ENCODE measurements at regions of chr5 and their contacts with region 1.

Region 1: DNA sequence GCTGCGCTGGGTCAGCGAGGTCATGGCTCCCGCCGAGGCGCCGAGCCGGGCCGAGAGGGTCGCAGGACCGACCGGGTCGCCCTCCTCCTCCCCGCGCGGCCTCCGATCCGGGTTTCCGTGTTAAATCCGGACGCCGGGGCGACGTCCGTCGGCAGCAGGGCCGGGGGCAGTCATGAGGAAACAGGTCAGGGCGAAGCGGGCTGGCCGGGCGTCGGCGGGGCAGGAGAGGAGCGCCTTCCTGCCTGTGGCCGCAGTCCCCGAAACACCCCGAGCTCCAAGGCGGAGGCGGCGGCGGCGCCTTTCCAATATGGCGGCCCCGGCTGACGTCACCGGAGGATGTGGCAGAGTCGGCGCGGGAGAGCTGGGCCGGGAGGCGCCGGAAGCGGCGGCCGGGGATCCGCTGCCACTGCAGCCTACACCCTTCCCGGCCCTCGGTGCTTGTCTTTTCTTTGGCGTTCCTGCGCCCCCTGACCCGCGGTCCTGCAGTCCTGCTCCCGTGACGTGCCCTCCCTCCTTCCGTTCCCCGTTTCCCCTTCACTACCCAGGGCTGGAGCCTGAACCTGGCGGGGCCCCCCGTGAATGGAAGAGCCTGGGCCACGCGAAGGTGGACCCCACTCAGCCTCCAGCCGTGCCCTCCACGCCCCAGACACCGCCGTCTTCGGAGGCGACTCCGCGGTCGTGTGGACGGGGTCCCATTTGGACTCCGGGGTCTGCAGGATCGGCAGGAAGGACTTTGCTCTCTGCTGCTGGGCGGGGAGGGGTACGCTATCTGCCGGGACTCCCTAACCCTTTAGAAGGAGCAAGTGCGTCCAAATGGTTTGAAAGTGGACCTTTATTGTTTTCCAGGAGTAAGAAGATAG is at the start of gene GOLPH3:
- DNase-seq: peak; percentile 62 to 97
- H3K4me3 ChIP-seq: peak within 1 kb of the TSS; percentile 83 to 88 (median 84)
- H3K27ac ChIP-seq: peak within 1 kb of the TSS; percentile 99
- H3K4me1 ChIP-seq: no peaks in the 10 kb centered on the region
- H3K27me3 ChIP-seq: no peaks in the 10 kb centered on the region
- CTCF ChIP-seq: peak in 2 of 3 experiments; percentile 2 to 7; a peak in 2 of 4 replicates
- EP300 ChIP-seq: no peak; a peak in 1 of 3 replicates
- POLR2A ChIP-seq: peak; percentile 90 to 98
- RAD21 ChIP-seq: no peak
- total RNA-seq, gene GOLPH3: 86.1 and 93.6 TPM in 2 replicates

Region 2: DNA sequence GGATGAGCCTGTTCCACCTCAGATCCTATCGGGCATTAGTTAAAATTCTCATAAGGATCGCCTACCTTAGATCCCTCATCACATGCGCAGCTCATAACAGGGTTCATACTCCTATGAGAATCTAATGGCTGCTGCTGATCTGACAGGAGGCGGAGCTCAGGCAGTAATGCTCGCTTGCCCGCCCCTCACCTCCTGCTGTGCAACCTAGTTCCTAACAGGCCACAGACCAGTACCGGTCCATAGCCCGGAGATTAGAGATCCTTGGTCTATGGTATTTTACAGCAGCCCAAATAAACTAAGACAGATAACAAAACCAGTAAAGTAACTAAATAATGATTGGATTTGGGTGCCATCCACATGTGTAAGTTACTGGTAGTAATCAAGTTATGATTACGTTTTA is 17.6 kb before region 1 on chr5:
- CTCF ChIA-PET with region 1: interaction called, 4 read pairs
- POLR2A ChIA-PET with region 1: interaction called, 15 read pairs
- DNase-seq: peak in 1 of 2 experiments; percentile 66
- H3K4me3 ChIP-seq: no peak overlapping the region
- H3K27ac ChIP-seq: no peak overlapping the region
- H3K4me1 ChIP-seq: peaks cover 0 to 13% (median 2%) of the 10 kb centered on the region in 4 experiments; a peak in 2 of 7 replicates
- H3K27me3 ChIP-seq: no peaks in the 10 kb centered on the region
- CTCF ChIP-seq: no peak
- EP300 ChIP-seq: no peak
- POLR2A ChIP-seq: no peak
- RAD21 ChIP-seq: no peak

Region 3: GRCh38 chr5:32163785-32164184 is 10.5 kb before region 1 on chr5:
- CTCF ChIA-PET with region 1: interaction called, 5 read pairs
- POLR2A ChIA-PET with region 1: interaction called, 15 read pairs
- DNase-seq: no peak
- H3K4me3 ChIP-seq: no peak overlapping the region
- H3K27ac ChIP-seq: no peak overlapping the region
- H3K4me1 ChIP-seq: no peaks in the 10 kb centered on the region
- H3K27me3 ChIP-seq: no peaks in the 10 kb centered on the region
- CTCF ChIP-seq: no peak
- EP300 ChIP-seq: no peak
- POLR2A ChIP-seq: no peak
- RAD21 ChIP-seq: no peak

Region 4: DNA sequence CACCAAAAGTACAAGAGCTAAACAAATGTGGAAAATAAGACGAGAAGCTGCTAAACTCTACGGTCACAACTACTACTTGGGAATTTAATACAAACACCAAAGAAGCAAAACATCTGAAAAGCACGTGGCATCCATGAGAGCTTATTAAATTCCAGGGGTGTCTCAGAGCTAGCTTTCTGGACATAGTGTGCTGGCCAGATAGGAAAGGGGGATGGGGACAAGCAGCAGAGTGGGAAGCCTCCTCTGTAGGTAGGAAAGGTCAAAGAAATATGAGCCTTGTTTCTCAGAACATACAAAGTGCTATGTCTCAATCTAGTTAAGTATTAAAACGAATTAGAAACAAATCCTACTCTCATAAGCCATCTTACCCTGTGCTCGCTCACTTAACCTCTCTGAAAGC is 51.2 kb after region 1 on chr5:
- CTCF ChIA-PET with region 1: interaction called, 3 read pairs
- POLR2A ChIA-PET with region 1: interaction called, 13 read pairs
- DNase-seq: no peak
- H3K4me3 ChIP-seq: no peak overlapping the region
- H3K27ac ChIP-seq: no peak overlapping the region
- H3K4me1 ChIP-seq: no peaks in the 10 kb centered on the region
- H3K27me3 ChIP-seq: no peaks in the 10 kb centered on the region
- CTCF ChIP-seq: no peak
- EP300 ChIP-seq: no peak
- POLR2A ChIP-seq: no peak
- RAD21 ChIP-seq: no peak

Region 5: GRCh38 chr5:32239385-32239784 is 65.1 kb after region 1 on chr5:
- CTCF ChIA-PET with region 1: no interaction called
- POLR2A ChIA-PET with region 1: no interaction called
- DNase-seq: no peak
- H3K4me3 ChIP-seq: no peak overlapping the region
- H3K27ac ChIP-seq: no peak overlapping the region
- H3K4me1 ChIP-seq: no peaks in the 10 kb centered on the region
- H3K27me3 ChIP-seq: no peaks in the 10 kb centered on the region
- CTCF ChIP-seq: no peak
- EP300 ChIP-seq: no peak
- POLR2A ChIP-seq: no peak
- RAD21 ChIP-seq: no peak